Activated CD4-positive, alpha-beta T cell treated with anti-CD3 and anti-CD28 coated beads for 36 hours (primary cell): ENCODE measurements at regions of chr3 and their contacts with region 1.

Region 1: DNA sequence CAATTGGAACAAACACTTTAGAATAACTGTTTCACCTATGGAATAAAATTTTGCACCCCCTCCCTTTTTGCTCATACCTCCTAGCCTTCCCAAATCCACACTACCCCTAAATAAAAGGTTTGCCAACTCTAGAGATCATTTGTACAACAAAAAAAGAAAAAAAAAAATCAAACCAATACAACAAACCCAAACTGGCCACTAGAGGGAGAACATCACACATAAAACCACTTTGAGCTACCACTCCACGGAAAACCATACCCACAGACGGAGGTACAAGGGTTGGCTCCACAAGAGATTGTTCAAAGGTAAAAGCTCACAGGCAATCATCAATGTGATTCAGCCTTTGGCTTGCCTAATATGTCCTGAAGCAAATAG is 47.6 kb downstream of the SETMAR start:
- DNase-seq: peak; percentile 66
- ATAC-seq: peak; percentile 67
- H3K4me3 Mint-ChIP-seq: peak overlapping the region; percentile 74
- H3K27ac Mint-ChIP-seq: peak overlapping the region; percentile 48
- H3K4me1 Mint-ChIP-seq: peaks cover 17% of the 10 kb centered on the region
- H3K27me3 Mint-ChIP-seq: no peaks in the 10 kb centered on the region

Region 2: GRCh38 chr3:4340411-4341335 is 10.1 kb before region 1 on chr3:
- CTCF ChIA-PET with region 1: interaction called, 13 read pairs
- POLR2A ChIA-PET with region 1: no interaction called
- intact Hi-C with region 1: no loop called
- DNase-seq: no peak
- ATAC-seq: no peak
- H3K4me3 Mint-ChIP-seq: no peak overlapping the region
- H3K27ac Mint-ChIP-seq: peak overlapping the region; percentile 1
- H3K4me1 Mint-ChIP-seq: no peaks in the 10 kb centered on the region
- H3K27me3 Mint-ChIP-seq: no peaks in the 10 kb centered on the region

Region 3: DNA sequence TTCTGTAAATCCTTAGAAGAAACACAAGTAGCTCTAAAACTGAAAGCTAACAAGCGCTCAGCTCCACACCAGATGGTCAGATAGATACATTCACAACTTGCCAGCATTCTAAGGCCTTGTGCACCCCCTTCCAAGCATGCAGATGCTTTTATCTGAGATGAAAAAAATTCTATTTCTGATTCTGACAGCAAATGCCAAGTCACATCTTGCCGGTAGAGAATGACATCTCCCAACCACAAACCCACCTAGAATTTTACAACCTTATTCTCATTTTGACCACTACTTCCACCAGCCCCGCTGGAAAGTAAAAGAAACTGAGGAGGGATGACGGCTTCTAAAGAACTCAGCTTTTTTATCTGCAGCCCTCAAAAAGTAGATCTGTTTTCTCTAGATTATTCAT is 58.6 kb after region 1 on chr3:
- CTCF ChIA-PET with region 1: interaction called, 3 read pairs
- POLR2A ChIA-PET with region 1: no interaction called
- intact Hi-C with region 1: loop called (anchors 1 kb)
- DNase-seq: peak; percentile 43
- ATAC-seq: peak; percentile 67
- H3K4me3 Mint-ChIP-seq: peak overlapping the region; percentile 4
- H3K27ac Mint-ChIP-seq: peak overlapping the region; percentile 87
- H3K4me1 Mint-ChIP-seq: peaks cover 40% of the 10 kb centered on the region
- H3K27me3 Mint-ChIP-seq: no peaks in the 10 kb centered on the region

Region 4: DNA sequence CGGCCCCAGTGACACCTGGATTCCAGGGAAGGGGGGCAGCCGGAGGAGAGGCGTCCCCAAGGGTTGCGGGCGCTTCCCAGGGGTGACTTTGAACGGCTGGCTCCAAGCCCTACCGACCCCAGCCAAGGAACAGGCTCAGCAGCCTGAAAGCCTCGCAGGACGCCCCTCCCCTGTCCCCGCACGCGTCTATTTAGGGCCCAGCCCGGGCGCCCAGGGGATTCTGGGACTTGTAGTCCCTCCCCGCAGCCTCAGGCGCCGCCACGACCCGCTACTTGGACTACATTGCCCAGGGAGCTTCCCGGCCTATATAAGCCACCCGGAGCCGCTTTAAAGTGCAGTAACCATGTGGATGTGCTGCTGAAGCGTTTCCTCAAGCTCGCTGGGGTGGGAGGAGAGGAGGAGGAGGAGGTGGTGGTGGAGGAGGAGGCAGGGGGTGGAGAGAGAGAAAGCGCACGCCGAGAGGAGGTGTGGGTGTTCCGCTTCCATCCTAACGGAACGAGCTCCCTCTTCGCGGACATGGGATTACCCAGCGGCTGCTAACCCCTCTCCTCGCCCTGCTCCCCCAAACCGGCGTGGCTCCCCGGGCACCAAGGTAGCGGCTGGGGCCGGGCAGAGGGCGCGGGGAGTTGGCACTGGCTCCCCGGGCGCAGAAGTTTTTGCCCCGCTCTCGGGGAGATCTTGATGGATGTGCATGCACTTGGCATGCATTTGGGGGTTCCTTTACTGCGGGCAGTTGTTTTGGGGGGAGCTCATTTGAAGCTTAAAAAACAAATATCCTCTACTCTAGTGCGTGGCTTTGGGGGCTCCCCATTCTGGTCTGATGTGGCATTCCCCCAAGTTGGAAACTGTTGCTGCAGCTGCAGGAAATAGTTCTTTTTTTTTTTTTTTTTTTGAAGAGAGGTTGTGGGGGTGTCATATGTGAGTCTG is 142.5 kb after region 1 on chr3 and contains the start of gene ITPR1:
- CTCF ChIA-PET with region 1: interaction called, 15 read pairs
- POLR2A ChIA-PET with region 1: interaction called, 7 read pairs
- intact Hi-C with region 1: loop called (anchors 1 kb)
- DNase-seq: peak; percentile 99
- ATAC-seq: peak; percentile 95
- H3K4me3 Mint-ChIP-seq: peak within 1 kb of the TSS; percentile 77
- H3K27ac Mint-ChIP-seq: peak within 1 kb of the TSS; percentile 71
- H3K4me1 Mint-ChIP-seq: peaks cover 32% of the 10 kb centered on the region
- H3K27me3 Mint-ChIP-seq: peaks cover 8% of the 10 kb centered on the region
- total RNA-seq, gene ITPR1: 48.6 to 55.6 TPM

Region 5: DNA sequence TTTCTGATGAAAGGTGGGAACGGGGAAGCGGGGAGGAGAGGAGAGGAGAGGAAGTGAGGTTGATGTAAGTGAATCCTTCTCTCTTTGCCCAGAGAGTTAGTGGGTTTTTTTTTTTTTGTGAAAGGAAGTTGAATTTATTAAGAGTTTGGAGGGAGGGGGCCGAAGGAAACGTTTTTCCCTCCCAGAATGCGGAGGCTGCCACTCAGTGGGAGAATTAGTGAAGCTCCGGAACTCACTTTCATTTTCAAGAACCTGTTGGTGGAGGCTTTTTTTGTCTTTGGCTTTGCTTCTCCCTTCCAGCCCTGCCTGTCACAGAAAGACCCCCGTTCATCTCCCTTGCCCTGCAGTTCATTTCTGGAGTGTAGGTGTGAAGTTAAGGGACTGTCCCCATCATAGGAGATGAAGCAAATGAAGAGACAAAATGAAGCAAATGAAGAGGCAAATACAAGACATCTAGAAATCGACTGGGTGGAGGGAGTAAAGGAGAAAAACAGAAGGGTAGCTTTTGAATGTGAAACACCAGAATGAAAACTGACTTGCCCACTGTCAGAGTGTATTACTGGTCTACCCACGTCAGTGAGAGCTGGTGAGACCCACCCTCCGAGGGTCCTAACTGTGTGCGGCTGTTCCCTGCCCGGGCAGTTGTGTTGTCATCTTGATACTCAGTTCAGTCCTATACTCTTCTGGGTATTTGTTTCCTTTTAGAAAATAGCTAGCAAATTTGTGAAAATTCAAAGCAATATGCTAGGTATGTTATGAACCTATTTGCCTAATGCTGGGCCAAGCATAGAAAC is 233.9 kb after region 1 on chr3:
- CTCF ChIA-PET with region 1: interaction called, 11 read pairs
- POLR2A ChIA-PET with region 1: interaction called, 5 read pairs
- intact Hi-C with region 1: loop called (anchors 1 kb)
- DNase-seq: peak; percentile 46
- ATAC-seq: peak; percentile 75
- H3K4me3 Mint-ChIP-seq: peak overlapping the region; percentile 74
- H3K27ac Mint-ChIP-seq: peak overlapping the region; percentile 87
- H3K4me1 Mint-ChIP-seq: peaks cover 76% of the 10 kb centered on the region
- H3K27me3 Mint-ChIP-seq: no peaks in the 10 kb centered on the region

Region 6: GRCh38 chr3:4804161-4805058 is 453.6 kb after region 1 on chr3:
- CTCF ChIA-PET with region 1: no interaction called
- POLR2A ChIA-PET with region 1: no interaction called
- intact Hi-C with region 1: loop called in 1 of 2 experiments (anchors 1 kb)
- DNase-seq: peak; percentile 48
- ATAC-seq: no peak
- H3K4me3 Mint-ChIP-seq: peak overlapping the region; percentile 4
- H3K27ac Mint-ChIP-seq: peak overlapping the region; percentile 73
- H3K4me1 Mint-ChIP-seq: peaks cover 39% of the 10 kb centered on the region
- H3K27me3 Mint-ChIP-seq: no peaks in the 10 kb centered on the region

Region 7: DNA sequence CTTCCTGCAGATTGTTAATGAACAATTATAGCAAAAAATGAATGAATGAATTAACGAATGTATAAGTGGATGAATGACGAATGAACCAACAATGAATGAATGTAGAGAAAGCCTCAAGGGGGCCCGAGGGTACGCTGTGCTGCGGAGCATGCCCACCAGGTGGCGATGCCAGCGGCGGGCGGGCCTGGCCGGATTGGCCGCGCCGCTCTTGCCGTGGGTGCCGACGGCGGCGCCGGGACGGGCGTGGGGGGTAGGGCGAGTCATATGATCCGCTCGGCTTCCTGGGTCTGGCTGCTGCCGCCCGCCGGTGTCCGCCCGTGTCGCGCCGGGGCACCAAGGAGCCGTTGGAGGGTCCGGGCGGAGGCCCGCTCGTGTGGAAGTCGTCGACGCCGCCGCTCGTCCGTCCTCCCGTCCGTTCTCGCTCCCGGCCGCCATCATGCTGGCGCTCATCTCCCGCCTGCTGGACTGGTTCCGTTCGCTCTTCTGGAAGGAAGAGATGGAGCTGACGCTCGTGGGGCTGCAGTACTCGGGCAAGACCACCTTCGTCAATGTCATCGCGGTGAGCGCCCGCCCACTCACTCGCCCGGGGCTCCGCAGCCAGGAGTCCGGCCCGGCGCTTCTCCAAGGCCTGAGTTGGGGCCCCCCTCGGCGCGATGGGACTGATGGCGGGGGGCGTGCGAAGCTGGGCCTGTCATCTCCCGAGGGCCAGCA is 771.4 kb after region 1 on chr3 and contains the start of gene ARL8B:
- CTCF ChIA-PET with region 1: interaction called, 3 read pairs
- POLR2A ChIA-PET with region 1: no interaction called
- intact Hi-C with region 1: loop called in 1 of 2 experiments (anchors 5 kb)
- DNase-seq: peak; percentile 96
- ATAC-seq: peak; percentile 84
- H3K4me3 Mint-ChIP-seq: peak within 1 kb of the TSS; percentile 83
- H3K27ac Mint-ChIP-seq: peak within 1 kb of the TSS; percentile 94
- H3K4me1 Mint-ChIP-seq: peaks cover 42% of the 10 kb centered on the region
- H3K27me3 Mint-ChIP-seq: no peaks in the 10 kb centered on the region
- total RNA-seq, gene ARL8B: 44.7 to 45.1 TPM